MCF 10A (cell line): ENCODE measurements at regions of chr22 and their contacts with region 1.

Region 1: DNA sequence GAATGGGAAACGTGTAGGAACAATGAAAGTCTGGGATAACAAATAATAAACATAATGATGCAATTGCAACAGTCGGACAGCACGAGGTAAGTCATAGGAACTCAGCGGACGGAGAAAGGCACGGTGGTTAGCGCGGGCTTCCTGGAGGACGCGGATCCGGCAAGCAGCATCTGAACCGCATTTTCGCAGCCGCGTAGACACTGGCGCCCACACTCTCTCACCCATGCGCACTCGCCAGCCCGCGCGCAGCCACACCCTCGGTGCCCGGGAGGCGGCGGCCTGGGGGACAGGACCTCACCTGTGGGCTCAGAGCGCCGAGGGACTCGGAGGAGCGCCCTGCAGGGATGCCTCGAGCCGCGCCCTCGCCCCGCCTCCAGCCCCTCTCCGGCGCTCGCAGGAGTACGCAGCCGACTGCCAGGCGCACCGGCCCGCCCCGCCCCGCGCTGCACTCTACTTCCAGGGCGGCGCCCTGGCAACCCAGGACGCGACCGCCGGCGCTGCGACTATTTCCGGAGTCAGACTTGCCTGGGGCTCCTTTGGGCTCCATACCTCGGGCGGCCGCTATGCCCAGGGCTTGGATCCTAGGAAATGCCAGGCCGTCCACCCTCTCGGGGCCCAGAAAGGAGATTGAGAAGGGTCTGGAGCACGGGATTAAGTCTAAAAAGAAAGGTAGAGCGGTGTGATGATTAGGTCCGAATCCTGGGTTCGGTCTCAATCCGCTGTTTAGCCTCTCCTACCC is at the start of gene TTLL1:
- DNase-seq: peak; percentile 84
- H3K4me3 Mint-ChIP-seq: peak within 1 kb of the TSS; percentile 76
- H3K27ac Mint-ChIP-seq: peak within 1 kb of the TSS; percentile 95
- H3K4me1 Mint-ChIP-seq: peaks cover 5% of the 10 kb centered on the region
- H3K27me3 Mint-ChIP-seq: no peaks in the 10 kb centered on the region
- CTCF ChIP-seq: no peak
- total RNA-seq, gene TTLL1: 3.3 and 3.6 TPM in 2 replicates

Region 2: GRCh38 chr22:42662114-42663021 is 426.8 kb before region 1 on chr22:
- CTCF ChIA-PET with region 1: interaction called, 3 read pairs
- POLR2A ChIA-PET with region 1: no interaction called
- intact Hi-C with region 1: loop called (anchors 5 kb)
- DNase-seq: peak; percentile 74
- H3K4me3 Mint-ChIP-seq: peak overlapping the region; percentile 28
- H3K27ac Mint-ChIP-seq: no peak overlapping the region
- H3K4me1 Mint-ChIP-seq: no peaks in the 10 kb centered on the region
- H3K27me3 Mint-ChIP-seq: no peaks in the 10 kb centered on the region
- CTCF ChIP-seq: peak; percentile 89

Region 3: DNA sequence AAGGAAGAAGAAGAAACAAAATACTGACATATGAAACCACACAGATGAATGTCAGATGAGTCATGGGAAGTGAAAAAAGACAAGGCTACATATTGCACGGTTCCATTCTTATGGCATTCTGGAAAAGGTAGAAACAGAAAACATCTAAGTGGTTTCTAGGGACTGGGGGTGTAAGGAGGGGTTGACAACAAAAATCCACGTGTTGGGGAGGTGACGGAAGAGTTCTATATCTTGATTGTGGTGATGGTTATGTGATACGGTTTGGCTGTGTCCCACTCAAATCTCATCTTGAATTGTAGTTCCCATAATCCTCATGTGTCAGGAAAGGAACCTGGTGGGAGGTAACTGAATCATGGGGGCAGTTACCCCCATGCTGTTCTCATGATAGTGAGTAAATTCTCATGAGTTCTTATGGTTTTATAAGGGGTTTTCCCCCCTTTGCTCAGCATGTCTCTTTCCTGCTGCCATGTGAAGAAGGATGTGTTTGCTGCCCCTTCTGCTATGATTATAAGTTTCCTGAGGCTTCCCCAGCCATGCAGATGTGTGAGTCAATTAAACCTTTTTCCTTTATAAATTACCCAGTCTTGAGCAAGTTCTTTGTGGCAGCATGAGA is 225.7 kb before region 1 on chr22:
- CTCF ChIA-PET with region 1: interaction called, 10 read pairs
- POLR2A ChIA-PET with region 1: no interaction called
- intact Hi-C with region 1: loop called (anchors 1 kb)
- DNase-seq: peak; percentile 47
- H3K4me3 Mint-ChIP-seq: no peak overlapping the region
- H3K27ac Mint-ChIP-seq: peak overlapping the region; percentile 52
- H3K4me1 Mint-ChIP-seq: peaks cover 7% of the 10 kb centered on the region
- H3K27me3 Mint-ChIP-seq: no peaks in the 10 kb centered on the region
- CTCF ChIP-seq: no peak

Region 4: DNA sequence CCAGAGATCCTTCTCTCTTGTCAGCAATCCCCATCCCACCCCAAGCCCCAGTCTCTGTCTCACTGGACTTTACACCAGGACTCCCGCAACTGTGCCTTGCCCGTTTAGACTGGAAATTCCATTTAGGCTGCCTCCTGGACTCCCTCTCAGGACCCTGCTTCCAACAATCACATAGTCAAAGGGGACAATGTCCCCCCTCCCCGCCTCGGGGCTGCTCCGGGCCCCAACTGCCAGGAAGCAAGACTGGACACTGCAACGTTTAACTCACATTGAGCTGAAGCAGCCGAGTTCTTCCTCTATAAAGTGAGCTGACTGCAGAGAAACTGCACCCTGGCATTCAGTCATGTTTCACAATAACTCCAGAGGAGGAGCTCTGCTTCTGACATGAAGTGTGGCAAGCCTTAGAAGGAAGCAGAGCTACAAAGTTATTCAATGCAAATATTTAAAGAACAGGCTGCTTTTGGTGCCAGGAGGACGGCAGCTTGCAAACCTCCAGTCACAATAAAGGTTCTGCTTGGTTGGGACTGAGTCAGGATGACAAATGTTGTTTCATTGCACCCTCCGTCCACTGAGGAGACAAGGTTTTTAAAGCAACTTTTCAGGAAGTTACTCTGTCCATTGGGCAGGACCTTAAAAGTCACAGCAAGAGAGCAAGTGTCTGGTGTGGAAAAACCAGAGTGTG is 94.1 kb before region 1 on chr22:
- CTCF ChIA-PET with region 1: interaction called, 14 read pairs
- POLR2A ChIA-PET with region 1: interaction called, 11 read pairs
- intact Hi-C with region 1: loop called (anchors 1 kb)
- DNase-seq: peak; percentile 93
- H3K4me3 Mint-ChIP-seq: peak overlapping the region; percentile 73
- H3K27ac Mint-ChIP-seq: peak overlapping the region; percentile 98
- H3K4me1 Mint-ChIP-seq: peaks cover 41% of the 10 kb centered on the region
- H3K27me3 Mint-ChIP-seq: no peaks in the 10 kb centered on the region
- CTCF ChIP-seq: no peak

Region 5: GRCh38 chr22:43249789-43250471 is 160.8 kb after region 1 on chr22:
- CTCF ChIA-PET with region 1: no interaction called
- POLR2A ChIA-PET with region 1: no interaction called
- intact Hi-C with region 1: no loop called
- DNase-seq: no peak
- H3K4me3 Mint-ChIP-seq: no peak overlapping the region
- H3K27ac Mint-ChIP-seq: no peak overlapping the region
- H3K4me1 Mint-ChIP-seq: no peaks in the 10 kb centered on the region
- H3K27me3 Mint-ChIP-seq: peaks cover 50% of the 10 kb centered on the region
- CTCF ChIP-seq: no peak